GM13976 (cell line): ENCODE measurements at regions of chr11 and their contacts with region 1.

Region 1: GRCh38 chr11:22304337-22304961 is 33.7 kb upstream of the SLC17A6 start:
- DNase-seq: peak; percentile 30
- CTCF ChIP-seq: peak; percentile 52

Region 2: GRCh38 chr11:22169833-22170232 is 134.6 kb before region 1 on chr11:
- in situ Hi-C with region 1: loop called (anchors 10 kb)
- DNase-seq: no peak
- CTCF ChIP-seq: no peak

Region 3: GRCh38 chr11:22189660-22190059 is 114.8 kb before region 1 on chr11:
- in situ Hi-C with region 1: no loop called
- DNase-seq: no peak
- CTCF ChIP-seq: no peak